ENCODE measurements at regions of chr1 and their contacts with region 1.

Region 1: DNA sequence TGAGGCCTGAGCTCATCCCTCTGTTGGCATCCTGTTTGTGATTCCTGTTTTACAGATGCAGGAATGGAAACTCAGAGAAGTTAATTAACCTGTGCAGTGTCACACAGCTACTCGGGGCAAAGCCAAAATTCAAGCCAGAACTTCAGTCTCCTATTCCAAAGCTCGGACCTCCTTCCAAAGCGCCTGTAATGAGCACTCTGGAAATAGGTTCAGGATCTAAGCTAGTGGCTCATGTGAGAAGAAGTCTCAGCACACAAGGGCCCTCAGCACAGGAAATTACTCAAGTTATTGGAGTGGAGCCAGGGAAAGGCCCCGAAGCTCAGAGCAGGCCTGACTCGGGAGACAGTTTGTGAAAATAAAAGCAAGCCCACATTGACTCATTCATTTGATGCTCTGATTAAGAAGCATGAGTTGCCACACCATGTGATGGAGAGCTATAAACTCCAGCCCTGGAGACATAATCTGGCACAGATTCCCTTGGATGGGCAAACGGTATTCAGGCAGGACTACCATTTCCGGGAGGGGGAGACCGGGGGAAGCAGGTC is 50.6 kb upstream of the LYST start:
- DNase-seq: peak; percentile 96 to 99 (median 99)
- H3K4me3 ChIP-seq: peak overlapping the region in 1 of 3 experiments; percentile 3
- H3K4me3 Mint-ChIP-seq: peak overlapping the region in 1 of 2 donors; percentile 63
- H3K27ac ChIP-seq: peak overlapping the region; percentile 93 to 99
- H3K27ac Mint-ChIP-seq: peak overlapping the region; percentile 94 to 99 (median 98)
- H3K4me1 ChIP-seq: peaks cover 65 to 69% of the 10 kb centered on the region in 2 donors
- H3K4me1 Mint-ChIP-seq: peaks cover 70% of the 10 kb centered on the region
- H3K27me3 ChIP-seq: no peaks in the 10 kb centered on the region
- H3K27me3 Mint-ChIP-seq: peaks cover 0 to 3% (median 0%) of the 10 kb centered on the region in 3 donors
- CTCF ChIP-seq: no peak

Region 2: DNA sequence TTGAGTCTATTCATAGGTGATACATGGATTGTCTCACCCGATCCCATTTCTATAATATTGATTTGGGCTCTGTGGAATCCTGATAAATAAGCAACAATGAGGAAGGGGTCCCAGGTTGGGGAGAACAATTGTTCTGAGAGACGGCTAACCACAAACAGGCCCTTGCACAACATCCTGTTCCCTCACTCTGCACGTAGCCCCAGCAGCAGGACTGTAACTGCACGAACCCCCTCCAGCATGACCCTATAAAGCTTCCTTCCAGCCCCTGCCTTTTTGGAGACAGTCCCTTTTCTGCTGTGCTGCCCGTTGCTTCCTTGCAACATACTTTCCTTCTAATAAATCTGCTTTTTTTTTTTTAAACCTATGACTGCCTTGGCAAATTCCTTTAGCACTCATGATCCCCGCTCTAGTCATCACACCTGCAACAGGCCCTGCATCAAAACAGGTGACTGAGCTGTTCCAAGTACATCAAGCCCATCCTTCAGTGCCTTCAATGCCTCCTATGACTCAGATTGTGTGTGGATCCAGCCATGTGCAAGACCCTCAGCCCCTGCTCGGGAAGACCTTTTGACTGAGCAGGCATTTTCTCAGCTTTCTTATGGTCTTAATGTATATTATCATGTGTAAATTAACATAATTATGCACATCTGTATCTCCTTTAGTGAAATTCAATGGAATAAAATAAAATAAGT is 349.4 kb before region 1 on chr1:
- intact Hi-C with region 1: no loop called
- DNase-seq: peak; percentile 33 to 61 (median 54)
- H3K4me3 ChIP-seq: peak overlapping the region in 1 of 3 experiments; percentile 34
- H3K4me3 Mint-ChIP-seq: peak overlapping the region; percentile 21 to 85
- H3K27ac ChIP-seq: peak overlapping the region in 1 of 2 donors; percentile 66
- H3K27ac Mint-ChIP-seq: peak overlapping the region in 5 of 7 donors; percentile 10 to 67 (median 37)
- H3K4me1 ChIP-seq: peaks cover 26 to 29% of the 10 kb centered on the region in 2 donors
- H3K4me1 Mint-ChIP-seq: peaks cover 40% of the 10 kb centered on the region
- H3K27me3 ChIP-seq: no peaks in the 10 kb centered on the region
- H3K27me3 Mint-ChIP-seq: peaks cover 0 to 3% (median 0%) of the 10 kb centered on the region in 3 donors
- CTCF ChIP-seq: no peak

Region 3: GRCh38 chr1:235821361-235821981 is 95.9 kb before region 1 on chr1:
- intact Hi-C with region 1: no loop called
- DNase-seq: no peak
- H3K4me3 ChIP-seq: no peak overlapping the region
- H3K4me3 Mint-ChIP-seq: no peak overlapping the region
- H3K27ac ChIP-seq: peak overlapping the region in 1 of 2 donors; percentile 62
- H3K27ac Mint-ChIP-seq: peak overlapping the region in 4 of 7 donors; percentile 11 to 76 (median 66)
- H3K4me1 ChIP-seq: peaks cover 0 to 8% of the 10 kb centered on the region in 2 donors
- H3K4me1 Mint-ChIP-seq: peaks cover 18% of the 10 kb centered on the region
- H3K27me3 ChIP-seq: no peaks in the 10 kb centered on the region
- H3K27me3 Mint-ChIP-seq: no peaks in the 10 kb centered on the region
- CTCF ChIP-seq: no peak

Region 4: DNA sequence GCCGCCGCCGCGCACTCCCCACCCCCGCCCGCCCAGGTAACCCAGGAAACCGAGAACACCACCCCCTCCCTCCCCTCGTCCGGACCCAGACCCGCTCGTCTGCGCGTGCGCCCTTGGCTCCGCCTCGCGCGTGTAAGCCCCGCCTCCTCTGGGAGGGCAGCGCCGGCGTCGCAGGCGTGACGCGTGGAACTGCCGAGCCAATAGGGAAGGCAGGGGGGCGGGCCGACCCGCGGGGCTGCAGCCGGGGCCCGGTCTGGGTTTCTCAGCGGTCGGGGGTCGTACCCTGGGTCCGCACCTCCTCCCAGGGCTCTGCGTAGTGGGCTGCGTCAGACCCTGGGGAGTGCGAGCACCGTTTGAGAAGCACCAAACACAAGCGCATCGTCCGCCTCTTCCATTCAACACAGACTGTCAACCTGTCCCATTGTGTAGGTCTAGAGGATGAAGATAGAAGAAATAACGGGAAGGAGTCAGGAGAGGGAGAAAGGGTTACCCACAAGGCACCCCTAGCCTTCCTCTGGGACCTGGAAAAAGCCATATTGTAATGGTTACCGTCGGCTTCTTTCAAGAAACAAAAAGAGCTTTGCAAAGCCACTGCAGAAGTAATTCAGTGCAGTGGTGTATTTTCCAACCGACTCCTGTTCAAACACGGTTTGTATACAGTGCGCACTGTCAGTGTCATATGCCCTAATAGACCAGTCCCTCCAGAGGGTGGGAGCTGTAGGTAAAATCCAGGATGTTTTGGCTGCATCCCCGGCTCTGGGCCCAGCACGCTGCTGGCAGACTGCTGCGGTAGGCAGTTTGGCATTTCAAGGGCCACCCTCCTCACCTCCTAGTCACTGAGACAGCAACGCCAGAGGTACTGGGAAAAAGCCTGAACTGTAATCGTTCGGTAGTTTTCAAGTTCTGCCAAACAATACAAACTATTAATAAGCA is 50.2 kb before region 1 on chr1:
- intact Hi-C with region 1: loop called in 1 of 2 experiments (anchors 2 kb)
- DNase-seq: peak; percentile 87 to 96 (median 92)
- H3K4me3 ChIP-seq: peak overlapping the region; percentile 86 to 99 (median 93)
- H3K4me3 Mint-ChIP-seq: peak overlapping the region; percentile 83 to 85
- H3K27ac ChIP-seq: peak overlapping the region; percentile 97 to 98
- H3K27ac Mint-ChIP-seq: peak overlapping the region in 6 of 7 donors; percentile 94 to 98 (median 97)
- H3K4me1 ChIP-seq: peaks cover 41 to 46% of the 10 kb centered on the region in 2 donors
- H3K4me1 Mint-ChIP-seq: peaks cover 41% of the 10 kb centered on the region
- H3K27me3 ChIP-seq: no peaks in the 10 kb centered on the region
- H3K27me3 Mint-ChIP-seq: no peaks in the 10 kb centered on the region
- CTCF ChIP-seq: no peak

Region 5: GRCh38 chr1:235878082-235878811 is 39.1 kb before region 1 on chr1:
- intact Hi-C with region 1: loop called in 1 of 2 experiments (anchors 5 kb)
- DNase-seq: peak; percentile 57 to 82 (median 78)
- H3K4me3 ChIP-seq: peak overlapping the region in 1 of 3 experiments; percentile 55
- H3K4me3 Mint-ChIP-seq: peak overlapping the region in 1 of 2 donors; percentile 9
- H3K27ac ChIP-seq: peak overlapping the region; percentile 87 to 90
- H3K27ac Mint-ChIP-seq: peak overlapping the region; percentile 98 to 100 (median 99)
- H3K4me1 ChIP-seq: peaks cover 75 to 84% of the 10 kb centered on the region in 2 donors
- H3K4me1 Mint-ChIP-seq: peaks cover 85% of the 10 kb centered on the region
- H3K27me3 ChIP-seq: no peaks in the 10 kb centered on the region
- H3K27me3 Mint-ChIP-seq: no peaks in the 10 kb centered on the region
- CTCF ChIP-seq: no peak

Region 6: DNA sequence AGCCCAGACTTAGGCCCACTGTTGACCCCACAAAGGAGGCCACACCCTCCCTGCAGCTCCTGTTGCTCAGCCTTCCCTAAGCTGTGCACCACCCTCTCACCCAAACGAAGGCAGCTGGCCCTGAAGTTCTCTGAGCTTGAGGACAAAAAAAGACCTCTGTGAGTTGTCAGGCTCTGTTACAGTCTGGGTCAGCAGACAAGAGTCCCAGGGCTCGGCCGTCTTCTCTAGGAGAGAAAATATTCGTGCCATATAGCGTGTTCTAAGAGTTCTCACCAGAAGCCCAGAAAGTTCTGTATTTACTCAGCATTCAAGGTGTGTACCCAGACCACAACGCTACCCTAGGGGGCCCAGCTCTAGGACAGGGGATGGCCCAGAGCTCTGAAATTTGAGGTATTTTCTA is 25.1 kb before region 1 on chr1:
- intact Hi-C with region 1: no loop called
- DNase-seq: no peak
- H3K4me3 ChIP-seq: peak overlapping the region in 1 of 3 experiments; percentile 48
- H3K4me3 Mint-ChIP-seq: no peak overlapping the region
- H3K27ac ChIP-seq: peak overlapping the region; percentile 79 to 95
- H3K27ac Mint-ChIP-seq: peak overlapping the region; percentile 94 to 98 (median 97)
- H3K4me1 ChIP-seq: peaks cover 39 to 41% of the 10 kb centered on the region in 2 donors
- H3K4me1 Mint-ChIP-seq: peaks cover 51% of the 10 kb centered on the region
- H3K27me3 ChIP-seq: no peaks in the 10 kb centered on the region
- H3K27me3 Mint-ChIP-seq: peaks cover 0 to 2% (median 0%) of the 10 kb centered on the region in 3 donors
- CTCF ChIP-seq: no peak

Region 7: GRCh38 chr1:235938709-235939479 is 21.6 kb after region 1 on chr1:
- intact Hi-C with region 1: loop called in 1 of 2 experiments (anchors 2 kb)
- DNase-seq: peak; percentile 80 to 95 (median 93)
- H3K4me3 ChIP-seq: peak overlapping the region in 2 of 3 experiments; percentile 9 to 47
- H3K4me3 Mint-ChIP-seq: peak overlapping the region; percentile 58 to 77
- H3K27ac ChIP-seq: peak overlapping the region; percentile 95 to 100
- H3K27ac Mint-ChIP-seq: peak overlapping the region; percentile 97 to 100 (median 99)
- H3K4me1 ChIP-seq: peaks cover 97 to 100% of the 10 kb centered on the region in 2 donors
- H3K4me1 Mint-ChIP-seq: peaks cover 90% of the 10 kb centered on the region
- H3K27me3 ChIP-seq: no peaks in the 10 kb centered on the region
- H3K27me3 Mint-ChIP-seq: peaks cover 0 to 4% (median 0%) of the 10 kb centered on the region in 3 donors
- CTCF ChIP-seq: no peak

Region 8: GRCh38 chr1:235954306-235955283 is 37.3 kb after region 1 on chr1:
- intact Hi-C with region 1: loop called in 1 of 2 experiments (anchors 5 kb)
- DNase-seq: peak; percentile 86 to 94 (median 94)
- H3K4me3 ChIP-seq: peak overlapping the region in 1 of 3 experiments; percentile 52
- H3K4me3 Mint-ChIP-seq: peak overlapping the region; percentile 9 to 53
- H3K27ac ChIP-seq: peak overlapping the region; percentile 79 to 100
- H3K27ac Mint-ChIP-seq: peak overlapping the region; percentile 95 to 100 (median 96)
- H3K4me1 ChIP-seq: peaks cover 97 to 100% of the 10 kb centered on the region in 2 donors
- H3K4me1 Mint-ChIP-seq: peaks cover 99% of the 10 kb centered on the region
- H3K27me3 ChIP-seq: no peaks in the 10 kb centered on the region
- H3K27me3 Mint-ChIP-seq: peaks cover 0 to 2% (median 0%) of the 10 kb centered on the region in 3 donors
- CTCF ChIP-seq: no peak